Heart right ventricle (tissue), 16 donors: ENCODE measurements at regions of chr3 and their contacts with region 1.

Region 1: DNA sequence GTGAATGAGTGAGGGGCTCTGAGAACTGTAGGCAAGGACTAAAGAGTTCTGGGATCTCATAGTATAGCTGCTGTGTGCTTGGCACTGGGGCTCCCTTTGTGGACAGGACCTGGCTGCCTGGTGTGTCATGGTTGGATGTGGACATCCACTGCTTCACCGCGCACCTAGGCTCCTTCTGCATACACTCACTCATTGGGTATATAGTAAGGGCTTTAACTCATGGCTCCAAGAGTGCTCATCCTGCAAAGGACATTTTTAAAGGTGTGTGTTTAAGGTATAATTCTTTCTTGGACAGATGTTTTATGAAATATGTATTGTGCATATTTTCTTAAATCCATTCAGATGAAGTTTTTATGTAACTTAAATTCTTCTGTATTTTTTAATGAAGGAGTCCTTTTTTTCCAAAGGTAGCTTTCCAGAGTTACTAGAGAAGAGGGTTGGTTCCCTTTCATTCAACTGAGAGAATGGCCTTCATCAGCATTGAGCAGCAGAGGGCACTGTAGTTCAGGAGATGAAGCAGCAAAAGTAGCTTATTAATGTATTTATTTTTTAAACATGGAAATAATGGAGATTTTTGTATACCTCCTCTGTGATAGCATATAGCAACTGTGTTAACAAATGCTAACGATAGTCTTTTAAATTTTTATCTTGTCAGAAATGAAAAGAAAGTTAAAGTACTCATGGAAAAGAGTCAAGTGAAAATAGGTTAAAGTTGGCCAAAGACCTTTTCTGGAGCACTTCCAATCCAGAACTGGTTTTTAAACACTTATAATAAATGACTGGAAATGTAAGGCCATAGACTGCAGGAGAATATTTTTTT is 25.2 kb downstream of the OXNAD1 start:
- DNase-seq: peak in 1 of 2 donors; percentile 54
- ATAC-seq: peak in 4 of 8 donors; percentile 34 to 65 (median 44)
- H3K4me3 ChIP-seq: no peak overlapping the region
- H3K27ac ChIP-seq: peak overlapping the region in 7 of 10 donors; percentile 4 to 88 (median 73)
- H3K4me1 ChIP-seq: peaks cover 26 to 76% (median 60%) of the 10 kb centered on the region in 9 donors
- H3K27me3 ChIP-seq: no peaks in the 10 kb centered on the region
- CTCF ChIP-seq: peak; percentile 47 to 95 (median 85)

Region 2: DNA sequence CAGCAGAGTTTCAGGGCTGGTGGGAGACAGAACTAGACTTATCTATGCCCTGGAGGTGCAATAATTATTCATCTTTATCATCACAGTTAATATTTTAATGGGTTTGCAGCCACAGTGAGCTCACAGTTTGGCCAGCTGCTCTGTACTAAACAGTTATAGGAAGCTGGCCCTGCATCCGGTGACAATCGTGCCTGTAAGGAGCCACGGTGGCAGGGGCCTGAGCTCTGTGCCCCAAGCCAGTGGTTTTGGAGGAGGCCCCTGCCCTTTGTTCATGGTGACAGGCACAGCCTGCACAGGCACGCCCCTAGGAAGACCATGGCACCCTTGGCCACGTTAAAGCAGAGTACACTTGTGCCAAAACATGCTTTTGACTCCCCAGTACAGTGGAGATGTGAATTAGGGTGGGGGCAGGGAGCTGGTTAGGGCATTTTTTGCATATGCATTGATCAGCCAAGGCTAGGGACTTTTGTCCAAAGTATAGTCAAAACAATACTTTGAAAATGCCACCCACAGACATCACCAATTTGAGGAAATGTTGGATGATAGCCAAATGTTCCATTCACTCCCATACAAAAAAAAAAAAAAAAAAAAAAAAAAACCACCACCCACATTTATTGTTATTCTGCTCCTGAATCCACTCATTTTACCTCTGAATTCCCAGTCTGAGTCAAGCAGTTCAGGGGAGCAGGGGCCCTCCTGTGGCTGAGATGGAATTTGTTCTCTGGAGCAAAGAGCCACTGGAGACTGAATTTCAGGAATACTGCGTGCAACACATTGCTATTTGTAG is 226.7 kb after region 1 on chr3:
- intact Hi-C with region 1: loop called in 9 of 10 experiments (anchors 1 to 10 kb)
- DNase-seq: peak in 1 of 2 donors; percentile 55
- ATAC-seq: peak; percentile 6 to 62 (median 34)
- H3K4me3 ChIP-seq: no peak overlapping the region
- H3K27ac ChIP-seq: peak overlapping the region; percentile 42 to 96 (median 59)
- H3K4me1 ChIP-seq: peaks cover 5 to 60% (median 45%) of the 10 kb centered on the region in 9 donors
- H3K27me3 ChIP-seq: no peaks in the 10 kb centered on the region
- CTCF ChIP-seq: peak; percentile 46 to 75 (median 59)

Region 3: GRCh38 chr3:16523778-16524177 is 233.6 kb after region 1 on chr3:
- intact Hi-C with region 1: loop called in 6 of 10 experiments (anchors 2 to 10 kb)
- DNase-seq: no peak
- ATAC-seq: no peak
- H3K4me3 ChIP-seq: no peak overlapping the region
- H3K27ac ChIP-seq: no peak overlapping the region
- H3K4me1 ChIP-seq: peaks cover 0 to 16% (median 8%) of the 10 kb centered on the region in 9 donors
- H3K27me3 ChIP-seq: no peaks in the 10 kb centered on the region
- CTCF ChIP-seq: no peak

Region 4: DNA sequence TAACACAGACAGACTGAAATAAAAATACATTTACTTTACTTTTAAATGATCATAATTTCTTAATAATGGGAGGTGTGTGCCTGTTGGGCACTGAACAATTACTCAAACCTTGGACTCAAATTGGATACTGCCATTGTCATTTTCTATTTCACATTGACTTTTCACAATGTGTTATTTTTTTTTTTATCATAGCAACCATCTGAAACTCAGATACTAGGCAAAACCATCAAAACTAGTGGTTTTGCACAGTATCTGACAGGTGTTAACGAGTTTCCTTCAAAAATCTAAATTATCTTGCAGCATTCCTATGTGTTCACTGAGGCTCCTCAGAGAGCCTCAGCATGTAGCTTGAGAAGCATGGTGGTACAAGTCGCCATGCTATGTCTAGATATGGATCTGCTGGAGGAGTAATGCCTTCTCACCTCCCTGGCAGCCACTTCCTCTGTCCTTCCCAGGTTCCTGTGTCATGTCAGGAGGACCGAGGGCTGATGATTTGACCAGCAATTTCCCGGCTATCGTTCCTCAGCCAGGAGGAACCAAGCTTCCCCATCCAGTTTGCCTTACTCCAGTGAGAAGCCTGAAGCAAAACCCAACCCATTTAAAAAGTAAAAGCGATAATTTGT is 253.1 kb after region 1 on chr3:
- intact Hi-C with region 1: loop called in 3 of 10 experiments (anchors 2 to 5 kb)
- DNase-seq: no peak
- ATAC-seq: no peak
- H3K4me3 ChIP-seq: no peak overlapping the region
- H3K27ac ChIP-seq: peak overlapping the region in 8 of 10 donors; percentile 57 to 92 (median 81)
- H3K4me1 ChIP-seq: peaks cover 4 to 65% (median 27%) of the 10 kb centered on the region in 9 donors
- H3K27me3 ChIP-seq: no peaks in the 10 kb centered on the region
- CTCF ChIP-seq: no peak